Psoas muscle (tissue), 8 donors: ENCODE measurements at regions of chr15 and their contacts with region 1.

Region 1: GRCh38 chr15:90184786-90185569 is 16.2 kb upstream of the SEMA4B start:
- DNase-seq: peak; percentile 72 to 82
- ATAC-seq: peak; percentile 81 to 89 (median 86)
- H3K4me3 ChIP-seq: peak overlapping the region; percentile 77
- H3K27ac ChIP-seq: peak overlapping the region; percentile 71
- H3K4me1 ChIP-seq: peaks cover 2% of the 10 kb centered on the region
- H3K27me3 ChIP-seq: no peaks in the 10 kb centered on the region
- CTCF ChIP-seq: no peak

Region 2: GRCh38 chr15:90106522-90107117 is 78.4 kb before region 1 on chr15:
- intact Hi-C with region 1: loop called in 1 of 2 experiments (anchors 2 kb)
- DNase-seq: peak; percentile 66 to 81
- ATAC-seq: peak; percentile 71 to 79 (median 76)
- H3K4me3 ChIP-seq: peak overlapping the region; percentile 15
- H3K27ac ChIP-seq: peak overlapping the region; percentile 100
- H3K4me1 ChIP-seq: peaks cover 34% of the 10 kb centered on the region
- H3K27me3 ChIP-seq: no peaks in the 10 kb centered on the region
- CTCF ChIP-seq: no peak